Transverse colon (tissue), 4 donors: ENCODE measurements at regions of chr17 and their contacts with region 1.

Region 1: GRCh38 chr17:43584666-43585102 is 38.5 kb upstream of the ETV4 start:
- DNase-seq: no peak
- H3K4me3 ChIP-seq: no peak overlapping the region
- H3K27ac ChIP-seq: no peak overlapping the region
- H3K4me1 ChIP-seq: peaks cover 0 to 11% (median 6%) of the 10 kb centered on the region in 4 donors
- H3K27me3 ChIP-seq: no peaks in the 10 kb centered on the region
- CTCF ChIP-seq: no peak
- EP300 ChIP-seq: no peak
- POLR2A ChIP-seq: no peak

Region 2: DNA sequence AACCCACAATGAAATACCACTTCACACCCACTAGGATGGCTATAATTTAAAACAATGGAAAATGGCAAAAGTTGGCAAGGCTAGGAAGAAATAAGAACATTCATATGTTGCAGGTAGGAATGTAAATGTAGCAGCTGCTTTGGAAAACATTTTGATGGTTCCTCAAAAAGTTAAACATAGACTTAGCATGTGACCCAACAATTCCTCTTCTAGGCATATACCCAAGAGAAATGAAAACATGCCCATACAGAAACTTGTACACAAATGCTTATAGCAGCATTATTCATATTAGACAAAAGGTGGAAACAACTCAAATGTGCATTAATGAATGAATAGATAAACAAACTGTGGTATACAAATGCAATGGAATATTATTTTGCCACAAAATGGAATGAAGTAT is 40.9 kb after region 1 on chr17:
- in situ Hi-C with region 1: no loop called
- intact Hi-C with region 1: loop called (anchors 1 kb)
- DNase-seq: no peak
- H3K4me3 ChIP-seq: no peak overlapping the region
- H3K27ac ChIP-seq: no peak overlapping the region
- H3K4me1 ChIP-seq: peaks cover 0 to 5% (median 1%) of the 10 kb centered on the region in 4 donors
- H3K27me3 ChIP-seq: peaks cover 4% of the 10 kb centered on the region
- CTCF ChIP-seq: no peak
- EP300 ChIP-seq: no peak
- POLR2A ChIP-seq: no peak